Ovary (tissue), 10 donors: ENCODE measurements at regions of chr14 and their contacts with region 1.

Region 1: DNA sequence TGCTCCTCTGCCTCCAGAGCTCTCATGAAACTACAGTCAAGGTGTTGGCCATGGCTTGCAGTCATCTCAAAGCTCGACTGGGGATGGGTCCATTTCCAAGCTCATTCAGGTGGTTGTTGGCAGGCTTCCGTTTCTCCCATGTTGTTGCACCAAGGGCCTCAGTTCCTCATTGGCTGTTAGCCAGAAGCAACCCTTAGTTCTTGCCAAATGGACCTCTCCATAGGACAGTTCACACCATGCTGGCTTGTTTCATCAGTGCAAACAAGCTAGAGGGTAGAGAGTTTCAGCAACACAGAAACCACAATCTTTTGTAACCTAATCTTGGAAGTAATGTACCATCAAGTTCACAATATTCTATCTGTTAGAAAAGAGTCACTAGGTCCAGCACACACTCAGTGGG is 22.7 kb upstream of the PPM1A start:
- DNase-seq: no peak
- H3K4me3 ChIP-seq: no peak overlapping the region
- H3K27ac ChIP-seq: no peak overlapping the region
- H3K4me1 ChIP-seq: no peaks in the 10 kb centered on the region
- H3K27me3 ChIP-seq: no peaks in the 10 kb centered on the region
- CTCF ChIP-seq: no peak
- EP300 ChIP-seq: no peak
- POLR2A ChIP-seq: no peak

Region 2: DNA sequence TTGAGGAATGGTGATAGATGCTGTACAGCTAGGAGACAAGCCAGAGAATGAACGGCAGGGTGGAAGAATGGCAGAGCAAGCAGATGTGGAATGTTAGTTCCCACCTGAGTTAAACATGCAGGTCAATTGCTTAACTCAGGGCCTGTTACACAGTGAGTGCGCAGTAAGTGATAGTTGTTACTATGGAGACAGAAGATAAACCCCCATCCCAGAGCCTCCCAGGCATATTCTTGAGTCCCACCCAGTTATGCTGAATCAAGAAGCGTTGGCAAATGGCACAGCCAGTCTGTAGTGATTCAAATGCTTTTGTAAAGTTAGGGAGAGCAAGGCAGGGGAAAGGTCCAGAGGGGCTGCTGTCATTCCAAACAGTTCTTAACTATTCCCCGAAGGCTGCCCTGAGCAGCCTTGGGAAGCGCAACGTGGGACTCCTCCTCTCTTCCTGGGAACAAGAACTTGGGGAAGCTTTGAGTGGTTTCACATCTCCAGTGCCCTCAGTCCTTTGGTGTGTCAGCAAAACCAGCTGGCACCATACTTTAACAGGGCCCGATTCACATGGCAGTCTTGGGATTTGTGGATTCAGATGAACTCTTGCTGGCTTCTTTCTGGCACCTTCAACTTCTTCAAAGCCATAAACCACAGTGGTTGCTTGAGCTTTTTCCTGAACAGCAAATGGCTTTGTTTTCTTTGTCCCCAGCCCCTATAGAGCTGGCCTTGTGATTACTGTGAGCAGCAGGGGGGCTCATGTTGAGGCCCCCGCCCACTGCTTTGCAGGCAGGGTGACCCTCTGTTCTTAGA is 89.1 kb after region 1 on chr14:
- intact Hi-C with region 1: loop called in 1 of 4 experiments (anchors 1 kb)
- DNase-seq: no peak
- H3K4me3 ChIP-seq: no peak overlapping the region
- H3K27ac ChIP-seq: no peak overlapping the region
- H3K4me1 ChIP-seq: no peaks in the 10 kb centered on the region
- H3K27me3 ChIP-seq: no peaks in the 10 kb centered on the region
- CTCF ChIP-seq: no peak
- EP300 ChIP-seq: no peak
- POLR2A ChIP-seq: no peak